Heart right ventricle (tissue), 16 donors: ENCODE measurements at regions of chr1 and their contacts with region 1.

Region 1: DNA sequence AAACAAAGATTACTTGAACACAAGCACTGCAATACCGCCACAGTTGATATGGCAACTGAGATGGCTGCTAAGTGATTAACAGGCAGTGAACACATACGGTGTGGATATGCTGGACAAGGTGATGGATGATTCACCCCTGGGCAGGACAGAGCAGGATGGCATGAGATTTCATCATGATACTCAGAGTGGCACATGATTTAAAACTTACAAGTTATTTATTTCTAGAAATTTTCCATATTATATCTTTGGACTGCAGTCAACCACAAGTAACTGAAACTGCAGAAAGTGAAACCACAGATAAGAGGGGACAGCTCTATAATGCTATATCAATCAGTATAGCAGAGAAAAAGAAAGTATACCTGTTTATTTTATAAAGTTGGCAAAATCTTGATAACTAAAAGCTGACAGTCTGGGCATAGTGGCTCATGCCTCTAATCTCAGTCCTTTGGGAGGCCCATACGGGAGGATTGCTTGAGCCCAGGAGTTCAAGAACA is 47.9 kb downstream of the PHACTR4 start:
- DNase-seq: no peak
- ATAC-seq: no peak
- H3K4me3 ChIP-seq: no peak overlapping the region
- H3K27ac ChIP-seq: peak overlapping the region in 1 of 10 donors; percentile 10
- H3K4me1 ChIP-seq: peaks cover 0 to 26% (median 20%) of the 10 kb centered on the region in 9 donors
- H3K27me3 ChIP-seq: no peaks in the 10 kb centered on the region
- CTCF ChIP-seq: no peak

Region 2: GRCh38 chr1:28359592-28360239 is 57.8 kb before region 1 on chr1:
- intact Hi-C with region 1: loop called in 1 of 10 experiments (anchors 5 kb)
- DNase-seq: peak; percentile 54 to 65
- ATAC-seq: peak in 2 of 8 donors; percentile 58 to 67
- H3K4me3 ChIP-seq: no peak overlapping the region
- H3K27ac ChIP-seq: no peak overlapping the region
- H3K4me1 ChIP-seq: peaks cover 0 to 5% (median 0%) of the 10 kb centered on the region in 9 donors
- H3K27me3 ChIP-seq: no peaks in the 10 kb centered on the region
- CTCF ChIP-seq: peak; percentile 42 to 79 (median 74)

Region 3: DNA sequence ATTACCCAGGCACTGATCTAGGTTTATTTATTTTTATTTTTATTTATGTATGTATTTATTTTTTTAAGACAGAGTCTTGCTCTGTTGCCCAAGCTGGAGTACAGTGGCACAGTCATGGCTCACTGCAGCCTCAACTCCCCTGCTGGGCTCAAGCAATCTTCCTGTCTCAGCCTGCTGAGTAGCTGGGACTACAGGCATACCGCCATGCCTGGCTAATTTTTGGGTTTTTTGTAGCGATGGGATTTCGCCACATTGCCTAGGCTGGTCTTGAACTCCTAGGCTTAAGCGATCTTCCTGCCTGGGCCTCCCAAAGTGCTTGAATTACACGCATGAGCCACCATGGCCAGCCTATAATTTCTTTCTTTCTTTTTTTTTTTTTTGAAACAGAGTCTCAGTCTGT is 38.6 kb before region 1 on chr1:
- intact Hi-C with region 1: no loop called
- DNase-seq: no peak
- ATAC-seq: no peak
- H3K4me3 ChIP-seq: no peak overlapping the region
- H3K27ac ChIP-seq: peak overlapping the region in 1 of 10 donors; percentile 28
- H3K4me1 ChIP-seq: peaks cover 0 to 8% (median 0%) of the 10 kb centered on the region in 9 donors
- H3K27me3 ChIP-seq: no peaks in the 10 kb centered on the region
- CTCF ChIP-seq: no peak

Region 4: DNA sequence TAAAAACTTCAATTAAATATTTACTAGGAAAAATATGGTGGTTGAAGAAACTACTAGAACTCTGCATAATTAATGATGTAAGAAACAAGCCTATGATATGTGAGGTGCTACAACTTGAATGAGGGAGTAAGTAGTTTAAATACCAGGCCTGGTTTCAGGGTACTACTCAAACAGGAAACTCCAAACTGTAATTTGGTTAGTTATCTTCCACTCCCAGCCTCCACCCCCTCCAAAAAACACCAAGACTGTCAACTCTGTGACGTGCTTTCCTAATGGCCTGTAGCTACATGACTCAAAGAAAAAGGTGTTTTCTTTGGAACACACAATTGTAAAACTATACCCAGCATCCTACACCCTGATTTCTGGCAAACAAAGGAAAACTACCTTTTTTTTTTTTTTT is 32.4 kb after region 1 on chr1:
- intact Hi-C with region 1: loop called in 1 of 10 experiments (anchors 5 kb)
- DNase-seq: peak in 1 of 2 donors; percentile 36
- ATAC-seq: peak in 4 of 8 donors; percentile 65 to 88 (median 71)
- H3K4me3 ChIP-seq: no peak overlapping the region
- H3K27ac ChIP-seq: peak overlapping the region in 4 of 10 donors; percentile 2 to 48 (median 25)
- H3K4me1 ChIP-seq: peaks cover 0 to 42% (median 6%) of the 10 kb centered on the region in 9 donors
- H3K27me3 ChIP-seq: no peaks in the 10 kb centered on the region
- CTCF ChIP-seq: no peak

Region 5: GRCh38 chr1:28470146-28470545 is 52.7 kb after region 1 on chr1:
- intact Hi-C with region 1: loop called in 4 of 10 experiments (anchors 5 to 10 kb)
- DNase-seq: no peak
- ATAC-seq: no peak
- H3K4me3 ChIP-seq: no peak overlapping the region
- H3K27ac ChIP-seq: no peak overlapping the region
- H3K4me1 ChIP-seq: peaks cover 0 to 7% (median 0%) of the 10 kb centered on the region in 9 donors
- H3K27me3 ChIP-seq: no peaks in the 10 kb centered on the region
- CTCF ChIP-seq: no peak

Region 6: GRCh38 chr1:28518000-28518744 is 100.7 kb after region 1 on chr1:
- intact Hi-C with region 1: no loop called
- DNase-seq: peak; percentile 88 to 92
- ATAC-seq: peak; percentile 91 to 96 (median 95)
- H3K4me3 ChIP-seq: peak overlapping the region; percentile 19 to 84 (median 67)
- H3K27ac ChIP-seq: peak overlapping the region in 9 of 10 donors; percentile 56 to 92 (median 80)
- H3K4me1 ChIP-seq: peaks cover 2 to 21% (median 13%) of the 10 kb centered on the region in 9 donors
- H3K27me3 ChIP-seq: no peaks in the 10 kb centered on the region
- CTCF ChIP-seq: peak; percentile 91 to 100 (median 99)